ENCODE measurements at regions of chr7 and their contacts with region 1.

Region 1: GRCh38 chr7:116499168-116500077 is at the start of gene CAV2:
- DNase-seq: peak; percentile 88 to 95
- H3K4me3 ChIP-seq: peak within 1 kb of the TSS; percentile 89
- H3K27ac ChIP-seq: peak within 1 kb of the TSS; percentile 81
- H3K4me1 ChIP-seq: peaks cover 35% of the 10 kb centered on the region
- H3K27me3 ChIP-seq: no peaks in the 10 kb centered on the region
- CTCF ChIP-seq: no peak
- total RNA-seq, gene CAV2: 260 and 296 TPM in 2 replicates

Region 2: DNA sequence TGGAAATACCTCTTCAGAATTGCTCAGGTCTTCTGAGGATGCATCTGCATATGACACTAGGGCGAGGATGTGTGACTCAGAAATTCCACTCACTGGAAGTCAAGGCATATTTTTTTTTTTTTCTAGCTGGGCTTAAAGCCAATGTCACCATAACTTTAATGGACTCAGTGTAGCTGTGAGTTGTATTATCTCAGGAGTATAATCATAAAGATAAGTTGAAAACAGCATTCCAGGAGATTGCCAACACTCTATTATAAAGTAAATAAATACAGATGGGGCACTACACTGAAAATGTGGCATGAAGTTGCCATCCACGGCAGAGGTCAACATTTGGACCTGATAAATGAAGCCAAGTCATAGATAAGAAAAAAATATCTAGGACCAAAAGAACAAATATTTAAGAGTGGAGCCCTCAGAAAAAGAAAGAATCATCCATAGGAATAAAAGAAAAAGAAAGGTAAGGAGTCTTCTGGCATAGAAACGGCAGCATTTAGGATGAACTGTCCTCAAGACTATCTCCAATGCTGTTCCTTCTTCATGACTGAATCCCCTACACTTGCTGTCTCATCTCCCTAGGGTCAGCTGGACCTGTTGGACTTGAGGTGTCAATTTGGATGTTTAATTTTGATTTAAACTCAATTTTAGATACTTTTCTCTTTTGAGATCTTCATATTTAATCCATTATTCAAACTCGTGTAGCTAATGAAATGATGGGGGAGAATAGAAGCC is 72.8 kb before region 1 on chr7:
- CTCF ChIA-PET with region 1: no interaction called
- POLR2A ChIA-PET with region 1: interaction called, 4 read pairs
- intact Hi-C with region 1: loop called (anchors 1 kb)
- DNase-seq: peak; percentile 56 to 91
- H3K4me3 ChIP-seq: no peak overlapping the region
- H3K27ac ChIP-seq: peak overlapping the region; percentile 59
- H3K4me1 ChIP-seq: peaks cover 26% of the 10 kb centered on the region
- H3K27me3 ChIP-seq: no peaks in the 10 kb centered on the region
- CTCF ChIP-seq: no peak

Region 3: GRCh38 chr7:116461500-116461899 is 37.9 kb before region 1 on chr7:
- CTCF ChIA-PET with region 1: no interaction called
- POLR2A ChIA-PET with region 1: interaction called, 4 read pairs
- intact Hi-C with region 1: loop called (anchors 1 kb)
- DNase-seq: no peak
- H3K4me3 ChIP-seq: no peak overlapping the region
- H3K27ac ChIP-seq: no peak overlapping the region
- H3K4me1 ChIP-seq: peaks cover 26% of the 10 kb centered on the region
- H3K27me3 ChIP-seq: no peaks in the 10 kb centered on the region
- CTCF ChIP-seq: no peak

Region 4: DNA sequence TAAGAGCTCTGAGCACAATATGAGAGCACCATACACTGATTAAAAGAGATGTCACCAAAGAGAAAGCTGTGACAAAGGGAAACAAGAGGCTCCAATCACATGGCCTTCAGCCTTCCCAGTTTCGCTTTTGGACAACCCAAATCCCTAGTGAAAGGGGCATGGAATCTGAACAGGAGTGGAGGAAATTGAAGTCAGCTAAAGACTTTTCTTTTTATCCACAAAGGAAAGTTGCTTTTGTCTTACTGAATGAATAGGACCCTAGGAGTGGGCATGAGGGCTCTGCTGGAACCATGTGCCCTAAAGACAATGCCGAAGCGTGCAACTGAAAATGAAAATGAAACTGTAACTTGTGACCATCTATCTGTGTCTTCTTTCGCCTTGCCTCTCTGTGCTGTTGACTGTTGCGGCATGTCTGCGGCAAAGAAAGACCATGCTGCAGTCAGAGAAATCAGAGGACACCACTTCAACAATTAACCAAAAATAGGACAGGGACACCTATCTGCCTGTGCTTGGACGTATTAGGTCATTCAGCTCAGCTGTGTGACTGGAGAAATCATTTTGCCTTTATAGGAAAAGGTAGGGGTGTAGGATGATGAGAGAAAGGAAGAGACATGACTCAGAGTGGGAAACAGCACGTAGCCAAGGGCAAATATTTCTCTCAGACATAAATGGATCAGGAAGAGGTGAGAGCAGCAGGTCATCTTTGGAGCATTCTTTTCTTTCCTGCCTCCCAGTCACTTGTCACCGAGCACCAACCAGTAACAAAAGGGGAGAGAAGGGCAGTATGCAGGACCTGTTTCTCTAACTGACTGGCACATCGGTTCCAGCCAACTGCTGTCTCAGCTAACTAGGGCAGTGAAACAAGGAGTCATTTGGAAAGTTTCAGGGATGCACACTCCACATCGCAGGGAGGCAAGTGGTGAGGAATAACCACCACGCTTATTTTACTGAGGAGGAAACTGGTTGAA is 12.4 kb after region 1 on chr7:
- CTCF ChIA-PET with region 1: interaction called, 5 read pairs
- POLR2A ChIA-PET with region 1: interaction called, 8 read pairs
- intact Hi-C with region 1: loop called (anchors 1 kb)
- DNase-seq: peak; percentile 59 to 91
- H3K4me3 ChIP-seq: peak overlapping the region; percentile 62
- H3K27ac ChIP-seq: peak overlapping the region; percentile 84
- H3K4me1 ChIP-seq: peaks cover 24% of the 10 kb centered on the region
- H3K27me3 ChIP-seq: no peaks in the 10 kb centered on the region
- CTCF ChIP-seq: no peak

Measured in PC-9 (cell line).